Natural killer cell (primary cell): ENCODE measurements at regions of chr10 and their contacts with region 1.

Region 1: DNA sequence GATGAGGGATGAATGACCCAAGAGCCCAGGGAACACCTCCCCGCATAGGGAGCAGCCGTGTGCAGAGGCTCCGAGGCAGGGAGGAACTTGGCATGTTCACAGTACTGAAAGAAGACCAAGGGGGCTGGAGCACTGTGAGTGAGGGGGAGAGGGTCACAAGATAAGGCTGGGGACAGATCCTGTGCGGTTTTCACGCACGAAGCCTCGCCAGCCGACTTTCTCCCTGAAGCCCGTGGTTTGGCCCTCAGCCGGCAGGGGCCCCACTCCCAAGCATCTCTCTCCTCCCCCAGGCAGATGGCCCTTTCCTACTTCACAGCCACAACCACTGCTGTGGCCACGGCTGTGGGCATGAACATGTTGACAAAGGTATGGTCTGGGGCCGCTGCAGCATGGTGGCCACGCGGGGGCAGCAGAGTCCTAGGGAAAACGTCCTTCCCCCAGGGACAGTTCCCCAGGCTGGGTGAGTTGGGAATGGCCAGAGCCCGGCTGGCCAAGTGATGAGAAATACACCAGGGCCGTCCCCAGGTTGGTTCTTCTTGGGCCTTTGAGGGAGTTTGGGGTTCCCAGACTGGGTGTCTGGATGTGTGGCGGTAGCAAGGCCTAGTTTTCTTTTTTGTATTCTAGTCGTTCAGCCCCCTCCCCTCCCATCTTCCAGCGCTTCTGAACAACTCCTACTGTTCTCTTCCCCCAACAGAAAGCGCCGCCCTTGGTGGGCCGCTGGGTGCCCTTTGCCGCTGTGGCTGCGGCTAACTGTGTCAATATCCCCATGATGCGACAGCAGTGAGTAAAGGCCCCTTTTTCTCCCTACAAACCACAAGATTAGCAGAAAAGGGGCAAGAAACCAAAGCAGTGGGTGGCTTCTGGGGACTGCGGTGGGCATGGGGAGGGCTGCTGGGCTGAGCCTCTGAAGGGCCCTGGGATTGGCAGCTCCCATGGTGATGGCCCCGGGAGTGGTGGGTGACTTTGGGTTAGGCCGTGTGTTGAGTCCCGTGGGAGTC is 14.4 kb upstream of the WBP1L start:
- DNase-seq: peak; percentile 67 to 70
- ATAC-seq: peak; percentile 87 to 95 (median 91)
- H3K4me3 ChIP-seq: no peak overlapping the region
- H3K4me3 Mint-ChIP-seq: peak overlapping the region; percentile 31
- H3K27ac ChIP-seq: peak overlapping the region; percentile 24
- H3K27ac Mint-ChIP-seq: peak overlapping the region; percentile 26 to 83
- H3K4me1 ChIP-seq: peaks cover 18% of the 10 kb centered on the region
- H3K4me1 Mint-ChIP-seq: peaks cover 11 to 15% of the 10 kb centered on the region in 2 donors
- H3K27me3 ChIP-seq: no peaks in the 10 kb centered on the region
- H3K27me3 Mint-ChIP-seq: no peaks in the 10 kb centered on the region
- CTCF ChIP-seq: peak; percentile 72

Region 2: GRCh38 chr10:102565793-102566192 is 163.5 kb before region 1 on chr10:
- intact Hi-C with region 1: no loop called
- DNase-seq: no peak
- ATAC-seq: no peak
- H3K4me3 ChIP-seq: no peak overlapping the region
- H3K4me3 Mint-ChIP-seq: no peak overlapping the region
- H3K27ac ChIP-seq: no peak overlapping the region
- H3K27ac Mint-ChIP-seq: no peak overlapping the region
- H3K4me1 ChIP-seq: no peaks in the 10 kb centered on the region
- H3K4me1 Mint-ChIP-seq: no peaks in the 10 kb centered on the region
- H3K27me3 ChIP-seq: no peaks in the 10 kb centered on the region
- H3K27me3 Mint-ChIP-seq: no peaks in the 10 kb centered on the region
- CTCF ChIP-seq: no peak

Region 3: DNA sequence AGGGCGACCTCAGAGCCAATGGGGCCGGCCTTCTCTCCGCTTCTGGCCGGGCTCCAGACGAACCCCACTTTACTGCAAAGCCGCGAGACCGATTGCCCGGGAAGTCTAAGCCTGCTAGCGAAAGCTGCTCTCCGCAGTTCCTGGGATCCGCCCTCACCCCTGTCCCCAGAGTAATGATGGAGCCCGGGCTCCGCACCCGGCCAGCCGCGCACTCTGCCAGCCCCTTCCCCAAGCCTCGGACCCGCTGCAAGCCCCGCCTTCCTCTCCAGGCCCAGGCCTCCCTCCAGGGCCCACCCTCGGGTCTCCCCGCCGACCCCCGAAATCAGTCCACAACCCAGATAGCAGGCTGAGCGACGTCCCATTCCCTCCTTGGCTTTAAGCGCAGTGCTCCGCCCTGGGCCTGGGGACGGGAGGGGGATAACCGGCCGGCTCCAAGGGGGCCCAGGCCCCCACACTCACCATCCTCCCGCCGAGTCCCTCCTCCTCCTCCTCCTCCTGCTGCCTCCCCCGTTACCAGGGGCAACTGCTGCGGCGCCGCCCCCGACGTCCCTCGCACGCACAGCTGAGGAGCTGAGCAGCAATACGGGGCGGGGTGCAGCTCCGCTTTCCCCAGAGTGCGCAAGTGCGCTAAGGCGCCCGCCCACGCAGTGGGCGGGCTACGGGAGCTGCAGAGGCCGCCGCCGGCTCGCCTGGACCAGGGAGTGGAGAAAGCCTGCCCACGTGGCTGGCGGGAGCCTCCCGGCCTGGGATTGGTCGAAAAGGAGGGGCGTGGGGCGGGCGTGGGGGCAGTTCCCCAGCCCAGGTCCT is 15.3 kb before region 1 on chr10 and contains the start of gene ARL3:
- intact Hi-C with region 1: no loop called
- DNase-seq: peak; percentile 82 to 97
- ATAC-seq: peak; percentile 92 to 98 (median 94)
- H3K4me3 ChIP-seq: peak within 1 kb of the TSS; percentile 99
- H3K4me3 Mint-ChIP-seq: peak within 1 kb of the TSS; percentile 82
- H3K27ac ChIP-seq: peak within 1 kb of the TSS; percentile 89
- H3K27ac Mint-ChIP-seq: peak within 1 kb of the TSS; percentile 79 to 96
- H3K4me1 ChIP-seq: peaks cover 15% of the 10 kb centered on the region
- H3K4me1 Mint-ChIP-seq: peaks cover 17 to 34% of the 10 kb centered on the region in 2 donors
- H3K27me3 ChIP-seq: no peaks in the 10 kb centered on the region
- H3K27me3 Mint-ChIP-seq: no peaks in the 10 kb centered on the region
- CTCF ChIP-seq: peak; percentile 67
- total RNA-seq, gene ARL3: 1.4 to 1.7 (median 1.5) TPM

Region 4: DNA sequence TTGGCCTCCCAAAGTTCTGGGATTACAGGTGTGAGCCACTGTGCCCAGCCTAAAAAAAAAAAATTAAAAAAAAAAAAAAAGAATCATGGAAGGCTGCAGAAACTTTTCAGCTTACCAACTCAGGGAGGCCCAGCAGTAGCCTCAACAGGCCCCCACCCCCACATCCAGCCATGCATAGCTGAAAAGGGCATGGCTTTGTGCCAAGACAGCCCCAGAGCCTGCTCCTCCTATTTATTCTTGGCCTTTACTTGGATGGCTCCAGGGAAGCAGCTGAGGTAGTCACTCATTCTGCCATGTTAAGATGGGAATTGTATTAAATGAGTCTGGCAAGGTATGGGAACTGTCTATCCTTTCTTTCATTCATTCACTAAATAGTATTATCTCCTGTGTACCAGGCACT is 175.0 kb after region 1 on chr10:
- intact Hi-C with region 1: loop called (anchors 1 kb)
- DNase-seq: no peak
- ATAC-seq: no peak
- H3K4me3 ChIP-seq: no peak overlapping the region
- H3K4me3 Mint-ChIP-seq: no peak overlapping the region
- H3K27ac ChIP-seq: no peak overlapping the region
- H3K27ac Mint-ChIP-seq: no peak overlapping the region
- H3K4me1 ChIP-seq: no peaks in the 10 kb centered on the region
- H3K4me1 Mint-ChIP-seq: no peaks in the 10 kb centered on the region
- H3K27me3 ChIP-seq: no peaks in the 10 kb centered on the region
- H3K27me3 Mint-ChIP-seq: no peaks in the 10 kb centered on the region
- CTCF ChIP-seq: no peak

Region 5: DNA sequence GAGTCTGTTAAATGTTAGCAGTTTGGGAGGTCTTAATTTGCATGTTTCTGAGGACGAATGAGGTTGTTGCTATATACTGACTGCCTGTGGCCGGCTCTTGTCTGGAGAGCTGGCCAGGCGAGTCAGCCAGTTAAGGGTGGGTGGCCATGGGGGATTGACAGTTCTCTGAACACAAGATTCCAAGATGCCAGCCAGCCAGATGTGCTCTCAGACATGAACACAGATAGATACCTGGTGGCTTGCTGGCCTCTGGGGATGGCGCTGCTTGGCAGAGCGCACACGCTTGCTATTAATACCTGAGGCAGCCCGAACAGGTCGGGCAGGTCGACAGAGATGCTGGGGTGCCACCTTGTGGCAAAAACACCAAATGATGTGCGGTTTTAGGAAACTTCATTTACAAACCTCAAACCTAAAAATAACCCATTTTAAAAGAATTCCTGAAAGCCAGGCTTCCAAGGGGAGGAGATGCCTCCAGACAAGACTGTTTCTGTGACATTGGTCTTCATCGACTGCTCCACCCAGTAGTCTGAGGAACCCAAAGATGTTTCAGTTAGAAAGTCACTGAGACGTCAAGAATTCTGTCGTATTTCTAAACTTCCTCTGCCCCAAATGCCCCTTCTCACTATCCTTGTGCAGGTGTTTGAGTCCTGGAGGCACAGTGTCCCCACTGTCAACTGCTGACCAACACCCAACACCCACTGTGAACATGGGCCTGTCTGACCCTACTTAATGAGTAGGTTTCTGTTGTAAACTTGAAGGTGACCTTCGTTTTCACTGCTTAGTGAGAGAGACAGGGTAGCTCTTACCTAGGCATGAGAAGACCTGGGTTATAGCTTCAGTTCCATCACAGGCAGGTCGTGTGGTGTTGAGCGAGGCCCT is 340.4 kb after region 1 on chr10:
- intact Hi-C with region 1: loop called (anchors 5 kb)
- DNase-seq: peak; percentile 57 to 86
- ATAC-seq: peak; percentile 80 to 88 (median 83)
- H3K4me3 ChIP-seq: no peak overlapping the region
- H3K4me3 Mint-ChIP-seq: no peak overlapping the region
- H3K27ac ChIP-seq: peak overlapping the region; percentile 9
- H3K27ac Mint-ChIP-seq: peak overlapping the region; percentile 80 to 82
- H3K4me1 ChIP-seq: peaks cover 25% of the 10 kb centered on the region
- H3K4me1 Mint-ChIP-seq: peaks cover 30 to 32% of the 10 kb centered on the region in 2 donors
- H3K27me3 ChIP-seq: no peaks in the 10 kb centered on the region
- H3K27me3 Mint-ChIP-seq: no peaks in the 10 kb centered on the region
- CTCF ChIP-seq: peak; percentile 76